Dorsolateral prefrontal cortex (tissue), 120 donors: ENCODE measurements at regions of chr17 and their contacts with region 1.

Region 1: DNA sequence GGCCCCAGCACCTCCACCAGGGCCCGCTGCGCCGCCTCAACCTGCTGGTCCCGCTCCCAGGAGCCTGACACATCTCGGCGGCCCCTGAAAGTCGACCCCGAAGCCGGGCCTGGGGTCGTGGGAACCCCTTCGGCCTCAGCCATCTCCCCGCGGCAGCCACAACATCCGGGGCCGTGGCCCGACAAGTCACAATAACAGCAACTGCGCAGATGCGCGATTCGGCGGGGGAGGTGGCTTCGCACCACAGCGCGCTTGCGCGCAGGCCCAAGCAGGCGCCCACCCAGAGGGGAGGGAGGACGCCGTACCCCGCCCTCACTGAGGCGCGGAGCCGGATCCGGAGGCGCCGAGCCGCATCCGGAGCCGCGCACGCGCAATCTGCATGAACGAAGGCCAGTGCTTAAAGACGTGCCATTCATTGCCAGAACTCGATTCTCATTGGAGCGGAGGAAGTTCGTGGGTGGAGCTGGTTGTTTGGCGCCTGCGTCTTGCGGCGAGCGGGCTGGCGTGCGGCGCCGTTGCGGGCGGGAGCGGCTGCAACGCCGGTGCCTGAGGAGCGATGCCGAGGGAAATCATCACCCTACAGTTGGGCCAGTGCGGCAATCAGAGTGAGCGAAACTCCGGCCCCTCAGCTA is at the starts of genes RETREG3 and TUBG1:
- DNase-seq: peak; percentile 97 to 99 (median 98)
- H3K4me3 ChIP-seq: peak within 1 kb of the TSS; percentile 68 to 100 (median 92)
- H3K27ac ChIP-seq: peak within 1 kb of the TSS; percentile 78 to 99 (median 94)
- H3K27me3 ChIP-seq: no peaks in the 10 kb centered on the region
- CTCF ChIP-seq: peak in 44 of 56 donors; percentile 1 to 57 (median 25)
- total RNA-seq, gene RETREG3: 38.8 to 64.5 (median 50.8) TPM
- total RNA-seq, gene TUBG1: 29.0 to 81.9 (median 52.2) TPM

Region 2: DNA sequence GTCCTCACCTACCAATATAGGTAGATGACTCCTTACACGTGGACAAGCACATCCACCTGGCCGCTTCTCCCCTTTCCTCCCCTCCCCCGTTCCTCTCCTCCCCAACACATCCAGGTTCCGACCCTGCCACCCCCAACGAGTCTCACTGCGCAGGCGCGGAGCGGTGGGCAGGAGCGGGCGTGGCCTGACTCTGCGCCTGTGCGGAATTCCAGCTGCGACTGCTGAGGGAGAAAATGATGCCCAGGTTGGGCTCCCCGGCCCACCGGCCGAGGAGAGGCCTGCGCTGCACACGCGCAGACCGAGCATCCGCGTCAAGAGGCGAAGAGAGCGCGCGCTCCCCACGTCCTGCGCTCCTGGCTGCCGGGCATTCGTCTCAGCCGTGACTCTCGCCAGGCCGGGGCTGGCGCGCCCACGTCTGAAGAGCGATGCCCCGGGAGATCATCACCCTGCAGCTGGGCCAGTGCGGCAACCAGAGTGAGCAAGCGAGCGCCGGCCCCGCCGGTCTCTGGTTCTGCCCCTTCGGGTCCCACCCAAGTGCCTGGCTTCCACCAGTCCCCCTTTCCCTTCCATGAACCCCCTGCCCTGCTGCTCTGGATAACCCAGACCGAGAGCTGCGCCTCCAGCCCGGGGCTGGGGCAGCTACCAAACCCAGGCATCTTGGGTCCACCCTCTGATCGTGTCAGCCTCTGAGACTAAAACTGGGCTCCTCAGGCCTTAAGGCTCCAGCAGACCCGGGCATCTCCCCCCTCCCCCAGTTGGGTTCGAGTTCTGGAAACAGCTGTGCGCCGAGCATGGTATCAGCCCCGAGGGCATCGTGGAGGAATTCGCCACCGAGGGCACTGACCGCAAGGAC is 50.0 kb after region 1 on chr17 and contains the start of gene TUBG2:
- intact Hi-C with region 1: loop called in 1 of 2 experiments (anchors 1 kb)
- DNase-seq: peak; percentile 81 to 94 (median 86)
- H3K4me3 ChIP-seq: peak within 1 kb of the TSS; percentile 42 to 99 (median 86)
- H3K27ac ChIP-seq: peak within 1 kb of the TSS in 58 of 59 donors; percentile 29 to 94 (median 84)
- H3K27me3 ChIP-seq: no peaks in the 10 kb centered on the region
- CTCF ChIP-seq: peak in 16 of 56 donors; percentile 10 to 44 (median 22)
- total RNA-seq, gene TUBG2: 64.3 to 154 (median 106) TPM